Activated T-helper 2 cell treated with anti-CD3 and anti-CD28 coated beads, Interferon-gamma antibody, Interleukin-2, Interleukin-4, amounts not matched to agents 10 μg/mL and 5 μg/mL and 100 μg/mL, durations not matched to agents 14 hours and 24 hours and 36 hours (primary cell): ENCODE measurements at regions of chr4 and their contacts with region 1.

Region 1: DNA sequence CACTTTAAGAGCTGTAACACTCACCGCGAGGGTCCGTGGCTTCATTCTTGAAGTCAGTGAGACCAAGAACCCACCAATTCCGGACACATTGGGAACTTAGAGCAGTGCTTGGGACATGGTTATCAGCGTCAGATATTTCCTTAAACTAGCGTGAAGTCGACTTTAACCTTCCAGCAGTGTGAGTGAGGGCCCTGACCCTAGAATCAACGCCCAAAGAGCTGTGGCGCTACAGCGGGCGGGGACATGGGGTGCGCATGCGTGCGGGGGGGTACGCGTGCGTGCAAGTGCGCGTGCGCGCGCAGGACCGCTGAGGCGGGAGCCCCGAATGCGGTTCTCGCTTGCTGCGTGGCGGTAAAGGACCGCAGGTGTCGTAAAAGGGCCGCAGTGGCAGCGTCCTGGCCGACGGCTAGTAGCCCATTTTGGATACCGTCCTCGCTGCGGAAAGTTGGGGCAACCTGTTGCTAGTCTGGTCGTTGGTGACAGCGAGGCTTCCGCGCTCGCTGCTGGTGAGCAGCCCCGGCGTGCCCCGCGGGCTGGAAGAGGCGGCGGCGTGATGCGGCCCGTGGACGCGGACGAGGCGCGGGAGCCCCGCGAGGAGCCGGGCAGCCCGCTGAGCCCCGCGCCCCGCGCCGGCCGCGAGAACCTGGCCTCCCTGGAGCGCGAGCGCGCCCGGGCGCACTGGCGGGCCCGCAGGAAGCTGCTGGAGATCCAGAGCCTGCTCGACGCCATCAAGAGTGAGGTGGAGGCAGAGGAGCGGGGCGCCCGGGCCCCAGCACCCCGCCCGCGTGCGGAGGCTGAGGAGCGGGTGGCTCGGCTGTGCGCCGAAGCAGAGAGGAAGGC is 19.8 kb upstream of the S100P start:
- DNase-seq: peak; percentile 94
- H3K4me3 Mint-ChIP-seq: peak overlapping the region; percentile 92
- H3K27ac Mint-ChIP-seq: peak overlapping the region; percentile 95
- H3K4me1 Mint-ChIP-seq: peaks cover 41% of the 10 kb centered on the region
- H3K27me3 Mint-ChIP-seq: no peaks in the 10 kb centered on the region

Region 2: DNA sequence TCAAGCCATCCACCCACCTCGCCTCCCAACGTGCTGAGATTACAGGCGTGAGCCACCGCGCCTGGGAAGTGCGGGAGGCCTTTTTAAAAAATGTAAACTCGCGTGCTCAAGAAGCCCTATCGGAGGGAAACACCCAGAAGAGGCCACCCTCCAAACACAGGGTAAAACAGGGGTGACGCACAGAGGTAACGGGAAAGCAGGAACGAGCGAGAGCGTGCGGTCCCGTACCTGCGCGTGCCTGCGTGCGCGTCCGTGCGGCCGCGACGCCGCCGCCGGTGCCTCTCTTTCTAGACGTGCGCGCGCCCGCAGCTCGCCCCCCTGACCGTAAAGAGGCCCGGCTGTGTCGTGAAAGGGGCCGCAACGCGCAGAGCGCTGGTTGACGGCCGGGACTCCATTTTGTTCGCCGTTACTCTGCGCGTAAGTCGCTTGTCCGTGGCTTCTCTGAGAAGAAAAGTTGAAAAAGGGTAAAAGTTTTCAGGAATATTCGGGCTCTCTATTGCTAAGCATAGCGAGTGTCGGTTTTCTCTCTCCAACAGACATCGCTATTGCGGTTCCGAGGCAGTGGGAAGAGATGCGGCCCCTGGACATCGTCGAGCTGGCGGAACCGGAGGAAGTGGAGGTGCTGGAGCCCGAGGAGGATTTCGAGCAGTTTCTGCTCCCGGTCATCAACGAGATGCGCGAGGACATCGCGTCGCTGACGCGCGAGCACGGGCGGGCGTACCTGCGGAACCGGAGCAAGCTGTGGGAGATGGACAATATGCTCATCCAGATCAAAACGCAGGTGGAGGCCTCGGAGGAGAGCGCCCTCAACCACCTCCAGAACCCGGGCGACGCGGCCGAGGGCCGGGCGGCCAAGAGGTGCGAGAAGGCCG is 33.4 kb before region 1 on chr4 and contains the start of gene MRFAP1:
- intact Hi-C with region 1: loop called (anchors 1 kb)
- DNase-seq: peak; percentile 93
- H3K4me3 Mint-ChIP-seq: peak within 1 kb of the TSS; percentile 97
- H3K27ac Mint-ChIP-seq: peak within 1 kb of the TSS; percentile 99
- H3K4me1 Mint-ChIP-seq: peaks cover 13% of the 10 kb centered on the region
- H3K27me3 Mint-ChIP-seq: no peaks in the 10 kb centered on the region
- total RNA-seq, gene MRFAP1: 105 TPM in 2 replicates

Region 3: DNA sequence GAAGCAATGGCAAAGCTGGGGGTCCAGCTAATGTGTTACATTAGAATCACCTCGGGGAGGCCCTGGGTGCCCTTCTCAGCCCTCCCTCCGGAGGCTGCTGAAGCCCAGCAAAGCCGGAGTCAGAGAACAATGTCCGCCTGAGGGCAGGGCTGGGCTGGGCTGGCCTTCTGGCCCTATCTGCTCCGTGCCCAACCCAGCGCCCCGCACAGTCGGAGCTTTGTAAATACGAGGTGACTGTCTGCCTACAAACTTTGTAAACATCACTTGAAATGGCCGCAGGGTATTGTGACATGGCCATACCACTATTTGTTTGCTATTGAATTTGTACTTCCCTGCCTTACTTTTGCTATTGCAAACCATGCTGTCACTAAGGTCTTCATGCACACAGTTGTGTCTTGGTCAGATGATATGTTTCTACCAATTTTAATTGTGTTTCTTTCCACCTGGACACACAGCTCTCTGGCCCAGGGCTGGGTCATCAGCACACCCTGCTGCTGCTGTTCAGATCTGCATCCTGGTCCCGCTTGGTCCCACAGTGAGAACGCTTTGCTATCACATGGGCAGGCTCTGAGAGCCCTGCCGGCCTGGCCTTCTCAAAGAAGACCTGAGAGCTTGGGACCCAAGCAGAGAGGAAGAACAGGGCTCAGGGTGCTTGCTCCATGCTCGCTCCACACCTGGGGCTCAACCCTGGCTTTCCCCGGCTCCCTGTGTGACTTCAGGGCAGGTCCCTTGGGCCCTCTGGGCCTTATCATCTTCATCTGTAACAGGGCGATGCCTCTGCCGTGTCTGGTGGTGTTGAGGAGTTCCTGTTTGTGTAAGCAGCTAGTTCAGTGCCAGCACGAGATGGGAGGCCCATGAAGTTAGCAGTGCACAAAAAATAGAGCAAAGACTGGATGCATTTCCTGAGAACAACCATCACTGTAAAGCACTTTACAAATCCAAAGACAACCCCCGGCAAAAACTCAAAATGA is 22.1 kb after region 1 on chr4:
- intact Hi-C with region 1: loop called (anchors 1 kb)
- DNase-seq: peak; percentile 66
- H3K4me3 Mint-ChIP-seq: peak overlapping the region; percentile 61
- H3K27ac Mint-ChIP-seq: peak overlapping the region; percentile 97
- H3K4me1 Mint-ChIP-seq: peaks cover 72% of the 10 kb centered on the region
- H3K27me3 Mint-ChIP-seq: no peaks in the 10 kb centered on the region

Region 4: DNA sequence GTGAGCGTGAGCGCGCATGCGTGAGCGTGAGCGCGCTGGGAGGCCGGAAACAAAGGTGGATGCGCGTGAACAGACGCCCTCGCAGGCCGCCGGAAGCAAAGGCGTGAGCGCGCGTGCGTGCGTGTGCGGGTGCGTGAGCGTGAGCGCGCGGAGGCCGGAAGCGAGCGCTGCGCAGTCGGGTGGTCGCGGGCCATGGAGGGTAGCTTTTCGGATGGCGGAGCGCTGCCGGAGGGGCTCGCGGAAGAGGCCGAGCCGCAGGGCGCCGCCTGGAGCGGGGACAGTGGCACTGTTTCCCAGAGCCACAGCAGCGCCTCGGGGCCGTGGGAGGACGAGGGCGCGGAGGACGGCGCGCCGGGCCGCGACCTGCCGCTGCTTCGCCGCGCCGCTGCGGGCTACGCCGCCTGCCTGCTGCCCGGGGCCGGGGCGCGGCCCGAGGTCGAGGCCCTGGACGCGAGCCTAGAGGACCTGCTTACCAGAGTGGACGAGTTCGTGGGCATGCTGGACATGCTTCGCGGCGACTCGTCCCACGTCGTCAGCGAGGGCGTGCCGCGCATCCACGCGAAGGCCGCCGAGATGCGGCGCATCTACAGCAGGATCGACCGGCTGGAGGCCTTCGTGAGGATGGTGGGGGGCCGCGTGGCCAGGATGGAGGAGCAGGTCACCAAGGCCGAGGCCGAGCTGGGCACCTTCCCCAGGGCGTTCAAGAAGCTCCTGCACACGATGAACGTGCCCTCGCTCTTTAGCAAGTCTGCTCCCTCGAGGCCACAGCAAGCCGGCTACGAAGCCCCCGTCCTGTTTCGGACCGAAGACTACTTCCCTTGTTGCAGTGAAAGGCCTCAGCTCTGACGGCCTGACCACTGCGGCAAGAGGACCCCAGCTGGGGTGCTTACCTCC is 42.4 kb after region 1 on chr4 and contains the start of gene BLOC1S4:
- intact Hi-C with region 1: loop called (anchors 1 kb)
- DNase-seq: peak; percentile 87
- H3K4me3 Mint-ChIP-seq: peak within 1 kb of the TSS; percentile 92
- H3K27ac Mint-ChIP-seq: peak within 1 kb of the TSS; percentile 95
- H3K4me1 Mint-ChIP-seq: peaks cover 24% of the 10 kb centered on the region
- H3K27me3 Mint-ChIP-seq: no peaks in the 10 kb centered on the region
- total RNA-seq, gene BLOC1S4: 18.2 and 20.8 TPM in 2 replicates

Region 5: GRCh38 chr4:6873792-6874461 is 200.0 kb after region 1 on chr4:
- intact Hi-C with region 1: loop called (anchors 5 kb)
- DNase-seq: peak; percentile 63
- H3K4me3 Mint-ChIP-seq: no peak overlapping the region
- H3K27ac Mint-ChIP-seq: no peak overlapping the region
- H3K4me1 Mint-ChIP-seq: peaks cover 2% of the 10 kb centered on the region
- H3K27me3 Mint-ChIP-seq: no peaks in the 10 kb centered on the region

Region 6: DNA sequence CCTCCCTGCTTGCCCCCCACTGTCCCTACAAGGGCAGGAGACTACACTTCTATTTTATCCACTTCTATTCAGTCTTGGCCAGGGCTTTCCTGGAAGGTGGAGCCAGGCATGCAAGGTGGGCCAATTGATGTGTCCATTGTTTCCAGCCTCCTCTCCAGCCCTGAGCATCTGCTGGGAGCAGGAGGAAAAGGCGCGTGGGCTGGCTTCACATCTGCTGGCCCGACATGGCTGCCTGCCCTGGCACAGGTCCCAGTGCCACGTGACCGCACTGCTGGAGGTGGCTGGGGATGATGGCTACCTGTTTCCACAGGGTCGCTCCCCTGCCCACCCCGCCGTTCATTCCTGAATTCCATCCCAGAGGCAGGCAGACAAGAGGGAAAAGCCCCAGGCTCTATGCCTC is 1018.1 kb after region 1 on chr4:
- intact Hi-C with region 1: no loop called
- DNase-seq: no peak
- H3K4me3 Mint-ChIP-seq: no peak overlapping the region
- H3K27ac Mint-ChIP-seq: no peak overlapping the region
- H3K4me1 Mint-ChIP-seq: no peaks in the 10 kb centered on the region
- H3K27me3 Mint-ChIP-seq: no peaks in the 10 kb centered on the region

Region 7: GRCh38 chr4:8205749-8206611 is 1532.1 kb after region 1 on chr4:
- intact Hi-C with region 1: no loop called
- DNase-seq: no peak
- H3K4me3 Mint-ChIP-seq: no peak overlapping the region
- H3K27ac Mint-ChIP-seq: no peak overlapping the region
- H3K4me1 Mint-ChIP-seq: peaks cover 10% of the 10 kb centered on the region
- H3K27me3 Mint-ChIP-seq: no peaks in the 10 kb centered on the region